Cardiac septum (tissue), 1 donor: ENCODE measurements at regions of chr7 and their contacts with region 1.

Region 1: DNA sequence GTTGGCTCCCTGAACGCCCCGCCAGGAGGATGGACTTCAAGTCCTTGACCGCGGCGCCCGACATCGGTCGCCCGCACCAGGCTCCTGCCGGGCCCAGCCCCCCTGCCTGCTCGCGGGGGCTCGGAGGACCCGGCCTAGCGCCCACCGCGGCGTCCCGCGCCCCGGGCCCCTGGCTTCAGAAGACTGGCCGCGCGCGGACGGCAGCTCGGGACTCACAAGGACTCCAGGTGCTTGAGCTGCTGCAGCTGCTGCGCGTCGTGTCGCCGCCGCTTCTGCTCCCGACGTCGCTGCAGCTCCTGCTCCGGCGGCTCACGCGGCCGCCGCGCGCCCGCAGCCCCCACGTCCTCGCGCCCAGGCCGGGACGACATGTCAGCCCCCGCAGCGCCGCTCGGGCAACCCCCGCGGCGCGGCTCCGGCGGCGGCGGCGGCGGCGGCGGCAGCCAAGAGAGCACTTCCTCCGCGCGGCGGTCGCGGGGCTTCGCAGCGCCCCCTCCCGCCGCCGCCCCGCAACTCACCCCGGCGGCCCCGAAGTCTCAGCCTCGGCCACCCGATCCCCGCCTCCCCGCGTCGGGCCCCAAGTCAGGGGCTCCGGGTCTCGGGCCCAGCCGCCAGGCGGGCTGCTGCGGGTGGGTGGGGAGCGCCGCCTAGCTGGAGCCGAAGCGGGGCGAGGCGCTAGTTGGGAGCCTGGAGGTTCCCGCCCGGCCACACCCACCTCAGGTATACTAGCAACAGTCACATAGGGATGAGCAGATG is at the start of gene RP9:
- DNase-seq: peak; percentile 86
- total RNA-seq, gene RP9: 19.3 TPM

Region 2: GRCh38 chr7:32495298-32496176 is 613.6 kb before region 1 on chr7 and contains the start of gene AVL9:
- intact Hi-C with region 1: loop called (anchors 10 kb)
- DNase-seq: peak; percentile 100
- total RNA-seq, gene AVL9: 12.5 TPM

Region 3: DNA sequence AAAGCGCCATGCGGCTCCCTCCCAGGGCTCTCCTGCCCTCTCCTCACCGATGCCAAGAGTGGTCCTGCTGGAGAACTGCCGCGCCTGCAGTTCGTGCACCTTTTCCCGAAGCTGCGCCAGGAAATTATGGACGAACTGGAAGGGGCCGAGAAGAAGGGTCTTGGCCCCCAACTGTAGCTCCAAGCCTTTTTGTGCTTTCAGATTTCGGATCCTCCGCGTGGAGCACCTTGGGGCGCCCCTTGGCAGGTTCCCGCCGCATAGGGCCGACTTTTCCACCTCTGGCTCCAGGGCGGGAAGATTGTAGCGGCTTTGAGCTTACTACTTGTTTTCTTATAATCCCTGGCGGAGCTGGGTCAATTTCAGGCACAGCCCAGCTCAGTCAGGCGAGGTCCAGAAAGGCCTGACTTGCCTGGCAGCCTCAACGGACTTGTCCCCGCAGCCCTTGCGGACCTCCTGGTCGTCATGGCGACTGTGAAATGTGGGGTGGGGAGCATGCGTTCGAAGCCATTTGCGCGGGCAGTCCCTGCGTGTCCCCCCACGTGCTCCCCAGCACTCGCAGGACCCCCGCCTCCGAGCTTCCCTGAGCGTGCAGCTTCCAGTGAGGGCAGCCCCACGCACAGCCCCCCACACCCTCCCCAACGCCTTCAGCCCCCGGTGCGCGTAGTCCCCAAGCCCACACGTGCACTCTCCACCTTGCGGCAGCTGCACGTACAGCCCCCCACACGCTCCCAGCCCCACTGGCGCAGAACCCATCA is 347.6 kb before region 1 on chr7:
- intact Hi-C with region 1: loop called (anchors 10 kb)
- DNase-seq: no peak

Region 4: DNA sequence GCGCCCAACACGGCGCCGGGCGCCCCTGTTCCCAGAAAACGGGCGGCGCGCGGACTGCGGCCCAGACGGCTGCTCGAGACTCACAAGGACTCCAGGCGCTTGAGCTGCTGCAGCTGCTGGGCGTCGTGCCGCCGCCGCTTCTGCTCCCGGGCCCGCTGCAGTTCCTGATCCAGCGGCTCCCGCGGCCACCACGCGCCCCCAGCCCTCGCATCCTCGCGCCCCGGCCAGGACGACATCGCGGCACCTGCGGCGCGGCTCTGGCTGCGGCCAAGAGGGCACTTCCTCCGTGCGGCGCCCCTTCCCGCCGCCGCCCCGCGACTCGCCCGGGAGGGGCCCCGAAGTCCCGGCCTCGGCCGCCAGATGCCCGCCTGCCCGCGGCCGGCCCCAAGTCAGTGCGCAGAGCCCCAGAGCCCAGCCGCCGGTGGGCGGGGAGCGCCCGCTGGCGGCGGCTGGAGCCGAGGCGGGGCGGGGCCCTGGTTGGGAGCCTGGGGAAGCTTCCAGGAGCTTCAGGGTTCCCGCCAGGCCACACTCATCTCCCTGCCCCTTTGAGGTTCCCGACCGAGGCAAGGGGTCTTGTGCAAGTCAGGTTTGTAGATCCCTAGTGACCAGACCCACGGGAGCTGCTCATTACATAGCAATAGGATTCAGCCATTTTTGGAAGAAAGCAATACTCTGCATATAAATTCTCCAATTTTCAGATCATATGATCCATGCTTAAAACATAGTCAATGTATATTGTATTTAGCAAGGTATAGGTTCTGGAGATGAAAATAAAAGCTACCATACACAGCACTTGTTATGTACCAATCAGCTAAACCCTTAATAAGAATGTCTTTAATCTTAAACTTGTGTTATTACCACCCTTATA is 166.2 kb before region 1 on chr7:
- intact Hi-C with region 1: loop called (anchors 5 kb)
- DNase-seq: peak; percentile 94

Region 5: DNA sequence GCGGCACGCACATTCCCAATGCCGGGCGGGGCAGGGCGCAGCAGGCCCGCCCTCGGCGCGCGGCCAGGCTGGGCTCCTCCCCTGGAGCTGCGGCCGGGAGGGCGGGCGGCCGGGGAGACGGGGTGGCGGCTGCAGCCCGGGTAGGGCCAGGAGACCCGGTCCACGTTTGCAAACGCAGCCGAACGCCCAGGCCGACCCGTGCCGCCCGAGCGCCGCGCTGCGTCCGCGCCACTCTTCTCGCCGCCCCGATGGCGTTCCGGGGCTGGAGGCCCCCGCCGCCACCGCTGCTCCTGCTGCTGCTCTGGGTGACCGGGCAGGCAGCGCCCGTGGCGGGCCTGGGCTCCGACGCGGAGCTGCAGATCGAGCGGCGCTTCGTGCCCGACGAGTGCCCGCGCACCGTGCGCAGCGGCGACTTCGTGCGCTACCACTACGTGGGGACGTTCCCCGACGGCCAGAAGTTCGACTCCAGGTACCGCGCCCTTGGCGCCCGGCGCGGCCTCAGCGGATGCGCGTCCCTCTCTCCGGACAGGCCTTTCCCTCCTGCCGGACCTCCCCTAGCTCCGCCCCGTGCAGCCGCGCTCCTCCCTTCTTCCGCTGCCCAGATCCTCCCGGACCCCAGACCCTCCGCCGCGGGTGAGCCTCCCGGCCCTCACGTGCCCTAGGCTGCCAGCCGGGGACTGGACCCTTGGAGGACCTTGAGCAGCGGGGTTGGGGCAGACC is 151.7 kb before region 1 on chr7 and contains the start of gene FKBP9:
- intact Hi-C with region 1: loop called (anchors 5 kb)
- DNase-seq: peak; percentile 94
- total RNA-seq, gene FKBP9: 137 TPM

Region 6: DNA sequence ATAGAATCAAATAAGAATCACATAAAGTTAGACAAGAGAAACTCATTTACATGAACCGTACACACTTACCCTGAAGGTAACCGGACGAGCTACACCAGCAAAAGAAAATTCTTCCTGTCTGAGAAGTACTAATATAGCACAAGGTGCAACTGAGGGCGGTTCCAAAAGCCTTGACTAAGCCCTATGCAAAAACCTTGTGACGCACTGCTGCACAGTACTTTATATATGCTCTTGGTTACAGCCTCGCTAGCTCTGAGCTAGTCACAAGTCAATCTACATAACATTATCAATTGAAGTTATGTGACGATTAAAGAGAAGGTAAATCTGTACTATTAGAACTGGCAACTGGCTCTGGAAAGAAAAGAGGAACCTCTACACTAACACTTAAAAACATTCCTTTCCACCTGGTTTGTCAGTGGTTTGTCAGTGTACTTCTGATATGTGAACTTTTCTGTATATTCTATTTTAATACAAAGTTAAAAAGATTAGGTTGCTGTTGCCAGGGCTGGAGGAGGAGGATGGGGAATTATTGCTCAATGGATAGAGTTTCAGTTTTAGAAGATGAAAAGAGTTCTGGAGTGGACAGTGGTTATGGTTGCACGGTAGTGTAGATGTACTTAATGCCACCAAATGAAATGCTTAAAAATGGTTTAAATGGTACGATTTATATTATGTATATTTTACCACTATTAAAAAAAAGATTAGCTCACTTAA is 68.2 kb before region 1 on chr7:
- intact Hi-C with region 1: loop called (anchors 10 kb)
- DNase-seq: no peak

Region 7: GRCh38 chr7:33062782-33063443 is 46.3 kb before region 1 on chr7:
- intact Hi-C with region 1: loop called (anchors 5 kb)
- DNase-seq: peak; percentile 98

Region 8: DNA sequence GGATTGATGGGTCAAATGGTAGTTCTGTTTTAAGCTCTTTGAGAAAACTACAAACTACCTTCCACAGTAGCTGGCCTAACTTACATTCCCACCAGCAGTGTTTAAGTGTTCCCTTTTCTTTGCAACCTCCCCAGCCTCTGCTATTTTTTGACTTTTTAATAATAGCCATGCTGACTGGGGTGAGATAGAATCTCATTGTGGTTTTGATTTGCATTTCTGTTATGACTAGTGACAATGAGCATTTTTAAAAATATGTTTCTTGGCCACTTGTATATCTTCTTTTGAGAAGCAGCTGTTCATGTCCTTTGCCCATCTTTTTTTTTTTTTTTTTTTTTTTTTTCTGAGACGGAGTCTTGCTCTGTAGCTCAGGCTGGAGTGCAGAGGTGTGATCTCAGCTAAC is 641.0 kb after region 1 on chr7:
- intact Hi-C with region 1: no loop called
- DNase-seq: no peak